Endothelial cell of umbilical vein (primary cell): ENCODE measurements at regions of chr3 and their contacts with region 1.

Region 1: DNA sequence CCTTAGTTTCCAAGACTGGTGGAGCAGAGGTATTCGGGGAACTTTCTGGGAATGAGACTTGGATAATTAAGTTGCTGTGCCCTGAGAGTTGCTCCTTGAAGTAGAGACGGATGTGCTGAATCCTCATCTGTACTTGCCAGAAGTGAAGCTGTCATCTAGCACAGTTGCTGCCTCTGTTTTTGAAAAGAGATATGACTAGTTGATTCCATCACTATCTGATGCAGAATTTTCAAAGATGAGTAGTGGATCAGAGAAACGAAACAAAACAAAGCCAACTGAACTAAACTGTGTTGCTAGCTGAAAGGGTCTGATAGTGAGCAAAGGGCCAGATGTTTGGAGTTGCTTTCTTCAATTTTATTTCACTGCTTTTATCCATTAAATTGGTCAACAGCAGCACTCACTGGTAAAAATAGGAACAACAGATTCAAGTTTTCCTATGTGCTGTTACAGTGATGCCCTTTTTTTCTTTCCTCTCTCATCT is 52.7 kb downstream of the MITF start:
- DNase-seq: peak; percentile 79
- H3K4me3 ChIP-seq: no peak overlapping the region
- H3K27ac ChIP-seq: peak overlapping the region; percentile 5
- H3K4me1 ChIP-seq: peaks cover 20% of the 10 kb centered on the region
- H3K27me3 ChIP-seq: no peaks in the 10 kb centered on the region
- CTCF ChIP-seq: peak; percentile 22 to 38
- POLR2A ChIP-seq: no peak

Region 2: DNA sequence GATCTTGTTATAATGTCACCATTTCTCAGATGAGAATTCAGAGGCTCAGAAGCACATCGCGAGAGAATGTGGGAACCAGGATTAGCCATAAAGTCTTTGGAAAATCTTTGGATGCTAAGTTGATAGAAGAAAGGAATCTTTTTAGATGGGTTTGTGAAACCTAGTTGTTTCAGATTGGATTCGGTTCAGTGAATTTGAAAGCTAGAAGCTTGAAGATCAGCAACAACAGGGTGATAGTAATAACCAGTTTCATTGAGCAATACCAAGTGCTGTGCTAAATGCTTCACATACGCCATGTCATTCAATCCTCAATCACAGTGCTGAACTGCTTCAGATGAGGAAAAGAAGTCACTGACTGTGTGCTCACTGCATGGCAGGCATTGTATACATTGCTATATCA is 100.1 kb before region 1 on chr3:
- CTCF ChIA-PET with region 1: interaction called, 174 read pairs
- POLR2A ChIA-PET with region 1: no interaction called
- dilution Hi-C with region 1: no loop called
- intact Hi-C with region 1: loop called (anchors 1 kb)
- DNase-seq: no peak
- H3K4me3 ChIP-seq: no peak overlapping the region
- H3K27ac ChIP-seq: no peak overlapping the region
- H3K4me1 ChIP-seq: no peaks in the 10 kb centered on the region
- H3K27me3 ChIP-seq: peaks cover 6 to 10% of the 10 kb centered on the region in 2 experiments
- CTCF ChIP-seq: no peak
- POLR2A ChIP-seq: no peak

Region 3: DNA sequence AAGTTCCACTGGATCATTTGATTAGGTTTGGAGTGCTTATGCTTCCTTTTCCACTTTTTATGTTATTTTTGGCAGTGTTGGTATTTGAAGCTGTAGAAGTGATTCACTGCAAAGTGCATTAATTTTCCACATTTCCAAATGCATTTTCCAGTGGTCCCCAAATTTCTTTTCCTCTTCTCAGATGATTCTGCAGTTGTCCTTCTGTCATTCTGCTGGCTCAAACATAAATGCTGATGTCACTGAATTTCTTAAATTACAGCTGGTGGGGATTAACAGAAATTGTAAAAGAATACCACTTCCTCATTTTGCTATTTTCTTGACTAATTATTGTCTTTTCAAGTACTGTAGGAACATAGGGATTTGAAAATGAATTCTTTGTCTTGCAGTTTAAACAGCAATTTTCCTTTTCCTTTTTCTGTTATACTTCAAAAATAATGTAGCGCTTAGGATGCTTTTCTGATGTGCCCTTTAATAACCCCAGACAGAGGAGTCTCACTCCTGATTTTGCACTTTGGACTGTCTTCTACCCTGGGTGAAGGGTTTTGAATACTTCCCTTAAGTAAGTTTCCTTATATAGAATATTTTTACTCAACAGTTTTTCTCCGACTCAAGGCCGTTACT is 27.7 kb before region 1 on chr3:
- CTCF ChIA-PET with region 1: interaction called, 10 read pairs
- POLR2A ChIA-PET with region 1: no interaction called
- dilution Hi-C with region 1: no loop called
- intact Hi-C with region 1: no loop called
- DNase-seq: no peak
- H3K4me3 ChIP-seq: peak overlapping the region in 1 of 3 experiments; percentile 30
- H3K27ac ChIP-seq: no peak overlapping the region
- H3K4me1 ChIP-seq: peaks cover 25% of the 10 kb centered on the region
- H3K27me3 ChIP-seq: no peaks in the 10 kb centered on the region
- CTCF ChIP-seq: no peak
- POLR2A ChIP-seq: no peak

Region 4: DNA sequence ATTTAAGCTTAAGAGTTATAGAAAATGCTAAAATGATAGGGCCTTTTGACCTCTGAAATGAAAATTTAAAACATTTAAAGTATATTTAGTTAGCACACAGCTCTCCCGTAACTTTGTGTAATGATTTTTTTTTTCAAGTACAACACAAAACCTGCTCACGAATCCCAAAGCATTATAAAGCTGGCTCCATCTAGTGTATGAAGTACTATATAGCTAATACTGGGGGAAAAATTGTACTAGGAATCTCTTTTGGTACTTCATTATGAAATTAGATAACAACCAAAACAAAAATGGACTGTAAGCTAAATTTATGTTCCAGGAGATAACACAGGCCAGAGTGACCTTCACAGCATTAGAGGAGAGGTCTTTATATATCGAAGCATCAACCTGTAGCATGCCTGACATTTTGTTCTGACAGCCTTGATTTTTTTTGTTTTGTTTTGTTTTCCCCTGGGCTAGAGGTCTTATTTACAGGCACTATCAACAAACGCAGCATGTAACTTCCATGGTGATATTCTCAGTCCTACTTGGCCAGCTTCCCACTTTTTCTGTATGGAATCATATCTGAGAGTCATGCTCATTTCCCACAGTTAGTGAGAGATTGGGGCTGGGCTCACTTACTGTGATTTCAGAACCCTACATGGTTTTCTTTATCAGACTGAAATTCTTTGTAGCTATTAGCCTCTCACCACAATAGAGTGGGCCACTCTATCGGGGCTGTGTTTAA is 63.6 kb after region 1 on chr3:
- CTCF ChIA-PET with region 1: interaction called, 31 read pairs
- POLR2A ChIA-PET with region 1: no interaction called
- dilution Hi-C with region 1: no loop called
- intact Hi-C with region 1: loop called (anchors 1 kb)
- DNase-seq: peak; percentile 85
- H3K4me3 ChIP-seq: no peak overlapping the region
- H3K27ac ChIP-seq: no peak overlapping the region
- H3K4me1 ChIP-seq: peaks cover 20% of the 10 kb centered on the region
- H3K27me3 ChIP-seq: no peaks in the 10 kb centered on the region
- CTCF ChIP-seq: peak; percentile 24 to 32
- POLR2A ChIP-seq: no peak